GM10248 (cell line): ENCODE measurements at regions of chr18 and their contacts with region 1.

Region 1: GRCh38 chr18:69916412-69916811 is 31.3 kb downstream of the CD226 start:
- DNase-seq: no peak
- CTCF ChIP-seq: no peak

Region 2: DNA sequence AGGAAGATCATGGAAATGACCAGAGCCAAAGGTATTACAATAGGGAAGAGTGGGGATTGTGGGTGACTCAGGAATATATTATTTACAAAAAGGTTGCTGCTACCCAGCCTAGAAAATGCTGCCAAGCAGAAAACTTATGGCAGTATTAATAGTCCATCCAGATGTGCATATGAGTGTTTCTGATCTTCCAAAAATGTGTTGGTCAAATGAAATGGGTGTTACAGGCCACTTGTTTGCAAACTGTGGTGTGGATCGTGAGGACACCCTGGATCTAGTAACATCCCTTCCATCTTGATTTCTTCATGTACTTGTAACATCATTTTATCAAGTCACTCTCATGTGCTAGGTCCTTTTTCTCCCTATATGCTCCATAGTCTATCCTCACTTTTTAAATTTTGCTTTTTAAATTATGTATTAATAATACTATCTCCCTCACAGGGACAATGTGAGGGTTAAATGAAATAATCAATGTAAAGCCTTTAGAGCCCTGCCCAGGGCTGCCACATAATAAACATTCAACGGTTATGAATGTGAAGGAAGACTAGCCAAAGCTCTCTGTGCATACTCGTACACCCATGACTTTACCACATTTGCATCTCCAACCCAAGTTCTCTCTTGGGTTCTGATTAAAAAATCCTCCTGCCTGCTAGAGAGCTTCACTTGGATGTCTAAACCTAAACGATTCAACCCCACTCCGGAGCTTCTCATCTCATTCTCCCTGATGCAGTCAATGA is 12.8 kb after region 1 on chr18:
- CTCF ChIA-PET with region 1: interaction called, 13 read pairs
- POLR2A ChIA-PET with region 1: interaction called, 5 read pairs
- DNase-seq: no peak
- CTCF ChIP-seq: no peak

Region 3: DNA sequence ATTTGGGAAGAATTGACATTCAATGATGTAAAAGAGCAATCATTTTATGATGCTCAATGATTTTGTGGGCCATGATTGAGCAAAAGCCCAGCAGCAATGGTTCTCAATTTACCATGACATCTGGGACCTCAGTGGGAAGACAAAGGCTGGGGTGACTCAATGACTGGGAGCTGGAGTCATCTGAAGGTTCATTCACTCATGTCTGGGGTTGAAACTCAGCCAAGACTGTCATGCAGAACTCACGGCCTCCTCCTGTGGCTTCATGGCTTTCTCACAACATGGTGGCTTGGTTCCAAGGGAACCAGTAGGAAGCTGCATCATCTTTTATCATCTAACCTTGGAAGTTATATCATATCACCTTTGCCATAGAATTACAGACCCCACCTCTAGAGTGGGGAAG is 76.4 kb after region 1 on chr18:
- CTCF ChIA-PET with region 1: no interaction called
- POLR2A ChIA-PET with region 1: no interaction called
- DNase-seq: no peak
- CTCF ChIP-seq: no peak

Region 4: GRCh38 chr18:70221156-70221914 is 304.9 kb after region 1 on chr18:
- CTCF ChIA-PET with region 1: no interaction called
- POLR2A ChIA-PET with region 1: no interaction called
- DNase-seq: no peak
- CTCF ChIP-seq: no peak